Posterior vena cava (tissue), 2 donors: ENCODE measurements at regions of chr2 and their contacts with region 1.

Region 1: DNA sequence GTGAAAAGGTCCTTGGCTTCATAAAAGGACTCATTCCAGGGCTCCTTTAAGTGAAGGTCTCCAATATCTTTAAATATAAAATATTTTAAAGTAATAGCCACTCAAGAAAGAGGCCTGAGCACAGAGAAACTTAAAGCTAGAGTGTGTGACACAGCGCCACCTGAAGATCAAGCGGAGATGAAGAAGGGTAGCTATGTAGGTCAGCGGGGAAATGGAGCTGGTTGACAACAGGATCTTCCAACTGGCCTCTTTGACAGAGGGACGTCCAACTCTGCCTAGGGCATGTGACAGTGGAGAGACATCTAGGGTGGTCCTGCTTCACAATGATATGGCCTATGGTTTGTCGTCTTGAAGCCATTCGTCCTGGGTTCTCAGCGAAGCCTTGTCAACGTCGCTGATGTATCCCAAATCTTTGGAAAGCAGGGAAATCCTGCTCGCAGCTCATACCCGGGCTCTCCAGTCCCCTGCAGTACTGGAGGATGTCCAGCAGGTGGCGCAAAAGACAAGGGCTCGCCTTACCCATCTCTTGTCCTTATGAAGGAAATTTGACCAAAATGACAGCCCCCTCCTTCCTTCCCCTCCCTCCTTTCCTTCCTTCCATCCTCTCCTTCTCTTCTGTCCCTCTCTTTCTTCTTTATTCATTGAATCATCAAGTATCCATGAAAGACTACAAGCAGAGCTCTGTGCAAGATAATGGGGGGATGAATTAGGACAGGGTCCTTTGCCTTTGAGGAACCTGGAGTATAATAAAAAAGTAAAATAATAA is 59.6 kb downstream of the LONRF2 start:
- DNase-seq: peak; percentile 90

Region 2: GRCh38 chr2:98487806-98488651 is 1774.7 kb before region 1 on chr2:
- intact Hi-C with region 1: no loop called
- DNase-seq: no peak

Region 3: GRCh38 chr2:99554238-99554637 is 708.5 kb before region 1 on chr2:
- intact Hi-C with region 1: loop called in 1 of 2 experiments (anchors 5 kb)
- DNase-seq: no peak

Region 4: DNA sequence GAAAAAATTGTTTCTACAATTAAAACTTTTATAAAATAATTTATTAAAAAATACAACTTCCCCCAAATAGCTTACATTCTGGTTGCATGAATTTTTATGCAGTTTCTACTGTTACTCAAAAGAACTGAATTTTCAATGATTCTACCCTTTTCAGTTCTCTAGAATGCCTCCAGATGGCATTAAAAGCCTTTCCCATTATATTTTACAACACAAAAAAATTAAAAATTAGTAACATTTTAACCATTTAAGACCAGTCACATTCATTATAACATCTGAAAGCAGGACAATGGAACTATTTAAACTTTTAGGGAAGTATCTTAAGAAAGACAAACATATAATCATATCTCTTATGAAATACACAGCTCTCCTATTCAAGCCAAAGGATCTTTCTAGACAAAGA is 536.9 kb before region 1 on chr2:
- intact Hi-C with region 1: no loop called
- DNase-seq: no peak

Region 5: DNA sequence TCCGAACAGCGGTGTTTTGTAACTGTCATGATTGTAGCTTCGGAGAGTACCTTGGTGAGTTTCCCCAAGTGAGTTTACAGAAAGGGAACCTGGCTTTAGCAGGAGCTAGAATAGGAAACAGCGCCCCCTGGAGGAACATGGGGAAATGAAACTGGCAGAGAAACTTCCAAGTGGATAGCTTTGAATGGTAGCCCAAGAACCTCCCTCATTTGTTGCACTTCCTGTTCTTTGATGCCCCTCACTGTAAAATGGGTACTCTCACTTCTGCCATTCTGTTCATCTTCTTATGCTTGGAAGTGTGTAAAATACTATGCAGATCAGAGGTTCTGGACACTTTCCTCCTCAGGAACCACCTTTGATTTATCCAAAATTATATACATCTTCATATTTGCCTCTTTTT is 118.5 kb after region 1 on chr2:
- intact Hi-C with region 1: loop called (anchors 2 to 5 kb)
- DNase-seq: peak; percentile 90